HCT116 (cell line): ENCODE measurements at regions of chr10 and their contacts with region 1.

Region 1: GRCh38 chr10:29735596-29736318 is 101.0 kb upstream of the SVIL start:
- DNase-seq: peak; percentile 80
- ATAC-seq: peak; percentile 87
- H3K4me3 ChIP-seq: peak overlapping the region; percentile 69 to 70
- H3K27ac ChIP-seq: peak overlapping the region; percentile 86
- H3K4me1 ChIP-seq: peaks cover 3 to 18% of the 10 kb centered on the region in 2 experiments; a peak in 3 of 4 replicates
- H3K27me3 ChIP-seq: no peaks in the 10 kb centered on the region
- CTCF ChIP-seq: peak; percentile 83 to 92 (median 87)
- POLR2A ChIP-seq: no peak
- RAD21 ChIP-seq: peak; percentile 91

Region 2: DNA sequence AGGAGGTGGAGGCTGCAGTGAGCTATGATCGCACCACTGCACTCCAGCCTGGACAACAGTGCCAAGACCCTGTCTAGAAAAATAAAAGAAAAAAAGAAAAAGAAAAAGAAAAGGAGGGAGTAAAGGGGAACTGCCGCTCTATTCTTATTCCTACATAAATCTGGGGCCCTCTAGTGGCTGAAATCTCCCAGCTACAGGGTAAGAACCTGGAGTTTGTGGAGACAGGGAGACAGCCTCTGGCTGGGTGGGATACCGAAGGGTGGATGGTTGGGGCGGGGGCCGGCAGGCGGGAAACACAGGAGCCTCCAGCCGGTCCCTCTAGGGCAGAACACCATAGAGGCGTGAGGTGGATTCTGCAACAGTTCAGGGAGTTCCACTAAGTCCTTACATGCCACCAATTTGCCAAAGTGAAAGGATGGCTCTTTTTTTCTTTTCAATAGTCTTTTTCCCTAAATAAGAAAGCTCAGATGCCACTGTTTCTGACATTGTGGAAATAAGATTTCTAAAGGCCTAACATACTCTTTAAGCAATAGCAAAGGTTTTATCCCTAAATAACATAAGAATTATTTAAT is 218.3 kb before region 1 on chr10:
- CTCF ChIA-PET with region 1: interaction called, 4 read pairs
- POLR2A ChIA-PET with region 1: no interaction called
- RAD21 ChIA-PET with region 1: no interaction called
- intact Hi-C with region 1: loop called (anchors 10 kb)
- DNase-seq: peak; percentile 16
- ATAC-seq: peak; percentile 83
- H3K4me3 ChIP-seq: no peak overlapping the region
- H3K27ac ChIP-seq: no peak overlapping the region
- H3K4me1 ChIP-seq: no peaks in the 10 kb centered on the region
- H3K27me3 ChIP-seq: no peaks in the 10 kb centered on the region
- CTCF ChIP-seq: peak; percentile 21 to 79 (median 73); a peak in 5 of 6 replicates
- POLR2A ChIP-seq: no peak
- RAD21 ChIP-seq: no peak

Region 3: DNA sequence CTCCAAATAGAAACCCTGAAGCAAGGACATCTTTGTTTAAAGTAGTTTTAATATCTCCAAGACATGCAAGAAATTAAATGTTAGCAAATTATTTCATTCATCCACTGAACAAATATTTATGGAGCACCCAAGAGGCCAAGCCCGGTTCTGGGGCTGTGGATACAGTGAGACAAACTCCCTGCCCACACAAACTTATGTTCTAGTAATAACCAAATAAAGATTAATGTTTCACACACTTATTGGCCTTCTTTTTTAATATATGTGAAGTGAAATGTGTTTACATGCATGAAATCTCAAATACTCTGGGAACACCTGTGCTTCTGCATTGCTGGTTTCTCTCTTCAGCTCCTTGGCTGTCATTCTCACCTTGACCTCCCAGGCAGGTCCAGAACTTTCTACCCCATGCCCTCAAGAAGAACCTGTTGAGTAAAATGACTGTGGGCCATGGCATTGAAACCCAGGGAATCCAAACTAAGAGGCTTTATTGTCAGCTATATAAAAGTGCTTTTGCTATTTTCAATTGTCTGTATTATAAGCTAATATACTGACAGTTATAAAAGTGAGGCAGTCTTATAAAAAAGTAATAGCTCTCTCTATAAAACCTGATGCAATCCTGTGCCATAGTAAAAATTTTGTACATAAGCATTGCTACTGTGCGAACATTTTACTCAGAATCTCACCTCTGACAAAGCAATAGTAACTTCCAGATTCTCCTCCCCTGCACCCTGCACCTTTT is 144.7 kb before region 1 on chr10:
- CTCF ChIA-PET with region 1: no interaction called
- POLR2A ChIA-PET with region 1: no interaction called
- RAD21 ChIA-PET with region 1: no interaction called
- intact Hi-C with region 1: loop called (anchors 2 kb)
- DNase-seq: no peak
- ATAC-seq: no peak
- H3K4me3 ChIP-seq: no peak overlapping the region
- H3K27ac ChIP-seq: no peak overlapping the region
- H3K4me1 ChIP-seq: peaks cover 9 to 11% of the 10 kb centered on the region in 2 experiments; a peak in 3 of 4 replicates
- H3K27me3 ChIP-seq: no peaks in the 10 kb centered on the region
- CTCF ChIP-seq: 0 out of 6 replicates have a peak, but pooled peaks of 1 of the 3 experiments have one; percentile 1
- POLR2A ChIP-seq: no peak
- RAD21 ChIP-seq: no peak

Region 4: DNA sequence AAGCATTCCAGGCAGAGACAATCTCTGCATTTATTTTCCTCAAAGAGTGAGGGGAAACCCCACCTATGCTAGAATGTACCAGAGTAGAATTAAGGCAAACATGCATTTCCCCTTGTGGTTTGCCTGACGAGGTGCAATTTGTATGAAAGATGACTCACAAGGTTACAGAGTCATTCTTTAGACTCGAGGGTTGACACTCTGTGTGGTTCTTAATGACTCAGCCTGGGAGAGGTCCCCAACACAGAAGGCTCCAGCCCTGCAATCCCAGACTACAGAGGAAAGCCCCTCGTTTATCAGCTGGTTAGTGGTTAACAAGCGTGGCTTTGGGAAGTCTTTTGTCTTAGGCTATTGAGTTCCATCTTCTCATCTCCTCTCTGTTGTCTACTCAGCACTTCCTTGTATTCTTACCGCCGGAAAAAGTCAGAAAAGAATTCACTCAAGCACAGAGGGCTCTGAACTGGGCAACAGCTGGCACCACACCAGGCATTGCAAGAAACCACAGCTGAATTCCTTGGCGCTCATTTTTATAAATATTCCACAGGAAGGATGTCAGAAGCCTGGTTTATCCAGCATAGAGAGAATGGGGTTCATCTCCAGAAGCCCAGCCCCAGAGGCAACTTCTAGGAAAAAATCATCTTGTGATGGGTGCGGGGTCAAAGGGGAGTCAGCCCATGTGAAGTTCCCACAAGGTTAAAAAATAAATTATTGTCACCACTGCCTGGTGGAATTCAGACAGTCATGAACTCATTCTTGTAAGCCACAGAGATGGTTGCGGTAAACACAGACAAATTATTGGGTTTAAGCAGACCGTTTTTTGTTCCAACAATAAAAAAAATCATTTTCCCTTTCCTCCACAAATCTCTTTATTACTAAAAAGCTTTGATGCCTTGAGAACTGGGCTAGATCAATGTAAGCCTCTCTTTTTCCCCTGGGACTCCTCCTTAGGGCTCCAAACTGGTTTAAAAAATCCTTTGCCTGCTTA is 76.5 kb before region 1 on chr10:
- CTCF ChIA-PET with region 1: no interaction called
- POLR2A ChIA-PET with region 1: no interaction called
- RAD21 ChIA-PET with region 1: no interaction called
- intact Hi-C with region 1: loop called (anchors 1 kb)
- DNase-seq: peak; percentile 97
- ATAC-seq: peak; percentile 97
- H3K4me3 ChIP-seq: peak overlapping the region in 1 of 2 experiments; percentile 31; a peak in 2 of 4 replicates
- H3K27ac ChIP-seq: peak overlapping the region; percentile 68
- H3K4me1 ChIP-seq: peaks cover 34 to 51% of the 10 kb centered on the region in 2 experiments
- H3K27me3 ChIP-seq: no peaks in the 10 kb centered on the region
- CTCF ChIP-seq: peak in 2 of 3 experiments; percentile 41 to 51; a peak in 4 of 6 replicates
- POLR2A ChIP-seq: no peak
- RAD21 ChIP-seq: peak; percentile 37; the same call in 1 of the 2 replicates

Region 5: DNA sequence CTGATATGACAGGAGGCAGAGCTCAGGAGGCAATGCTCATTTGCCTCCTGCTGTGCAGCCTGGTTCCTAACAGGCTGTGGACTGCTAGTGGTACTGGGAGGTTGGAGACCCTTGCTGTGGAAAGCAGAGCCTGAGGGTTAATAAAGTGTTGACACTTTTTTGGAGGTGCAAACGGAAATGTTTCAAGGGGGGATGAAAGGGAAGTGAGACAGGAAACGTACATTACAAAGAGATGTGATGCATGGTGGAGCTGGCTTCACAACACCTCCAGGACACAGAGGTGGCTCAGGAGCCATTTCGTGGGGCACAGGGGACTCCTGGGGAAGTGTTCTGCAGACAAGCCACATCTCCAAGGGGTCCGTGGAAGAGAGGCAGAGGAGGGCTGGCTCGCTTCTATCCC is 36.6 kb after region 1 on chr10:
- CTCF ChIA-PET with region 1: no interaction called
- POLR2A ChIA-PET with region 1: no interaction called
- RAD21 ChIA-PET with region 1: no interaction called
- intact Hi-C with region 1: loop called (anchors 1 kb)
- DNase-seq: no peak
- ATAC-seq: no peak
- H3K4me3 ChIP-seq: no peak overlapping the region
- H3K27ac ChIP-seq: no peak overlapping the region
- H3K4me1 ChIP-seq: no peaks in the 10 kb centered on the region
- H3K27me3 ChIP-seq: no peaks in the 10 kb centered on the region
- CTCF ChIP-seq: no peak
- POLR2A ChIP-seq: no peak
- RAD21 ChIP-seq: no peak

Region 6: DNA sequence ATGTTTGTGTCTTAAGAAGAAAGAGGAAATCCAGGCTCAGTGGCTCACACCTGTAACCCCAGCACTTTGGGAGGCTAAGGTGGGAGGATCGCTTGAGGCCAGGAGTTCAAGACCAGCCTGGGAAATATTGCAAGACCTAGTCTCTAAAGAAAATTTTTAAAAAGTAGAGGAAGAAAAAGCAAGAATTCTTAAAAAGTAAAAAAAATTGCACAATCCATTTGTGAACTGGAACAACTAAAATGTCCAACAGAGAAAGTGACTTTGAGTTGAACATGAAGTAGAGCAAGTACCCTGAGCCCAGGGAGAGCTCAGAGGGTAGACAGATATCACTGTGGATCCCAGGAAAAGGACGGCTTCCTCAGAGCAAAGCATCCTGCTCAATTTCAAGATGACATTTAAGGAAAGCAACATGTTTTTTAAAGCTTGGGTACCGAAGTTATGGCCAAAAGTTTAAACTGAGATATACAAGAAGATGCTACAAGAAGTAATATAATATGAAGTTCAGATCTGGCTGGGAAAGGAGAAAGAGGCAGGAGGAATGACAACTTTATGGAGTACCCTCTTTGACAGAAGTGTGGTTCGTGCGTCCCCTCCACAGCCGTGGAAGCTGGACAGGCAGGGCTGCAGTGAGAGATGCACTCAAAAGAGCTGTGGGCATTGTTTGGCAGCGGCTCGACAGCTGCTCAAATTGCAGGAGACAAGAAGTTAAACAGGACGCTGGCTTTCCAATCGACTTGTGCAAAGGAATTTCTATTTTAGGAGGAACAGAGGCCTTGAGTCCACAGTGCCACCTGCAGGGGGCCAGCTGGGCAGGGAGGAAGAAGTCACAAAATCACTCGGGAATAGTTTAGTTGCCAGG is 122.3 kb after region 1 on chr10:
- CTCF ChIA-PET with region 1: no interaction called
- POLR2A ChIA-PET with region 1: no interaction called
- RAD21 ChIA-PET with region 1: no interaction called
- intact Hi-C with region 1: loop called (anchors 2 kb)
- DNase-seq: peak; percentile 36
- ATAC-seq: peak; percentile 74
- H3K4me3 ChIP-seq: no peak overlapping the region
- H3K27ac ChIP-seq: no peak overlapping the region
- H3K4me1 ChIP-seq: peaks cover 6 to 20% of the 10 kb centered on the region in 2 experiments; a peak in 3 of 4 replicates
- H3K27me3 ChIP-seq: no peaks in the 10 kb centered on the region
- CTCF ChIP-seq: peak; percentile 66 to 86 (median 70)
- POLR2A ChIP-seq: no peak
- RAD21 ChIP-seq: peak; percentile 85